Activated CD4-positive, alpha-beta T cell treated with anti-CD3 and anti-CD28 coated beads for 36 hours (primary cell): ENCODE measurements at regions of chr15 and their contacts with region 1.

Region 1: DNA sequence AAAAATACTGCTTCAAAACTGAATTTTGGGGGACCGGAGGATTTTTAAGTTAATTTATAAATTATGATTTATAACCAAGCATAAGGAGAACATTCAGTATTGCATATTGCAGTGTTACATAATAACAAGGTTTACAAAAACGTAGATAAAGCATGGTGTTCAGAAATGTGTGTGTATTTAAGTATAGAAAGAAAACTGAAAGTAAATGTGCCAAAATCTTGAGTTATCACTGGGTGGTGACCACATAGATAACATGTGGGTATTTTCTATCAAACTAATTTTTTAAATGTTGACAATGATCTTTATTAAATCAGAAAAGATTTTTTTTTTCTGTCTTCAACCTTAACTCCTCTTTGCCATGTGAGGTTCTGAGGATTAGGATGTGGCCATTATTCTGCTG is 32.6 kb downstream of the EIF2AK4 start:
- DNase-seq: no peak
- ATAC-seq: no peak
- H3K4me3 Mint-ChIP-seq: no peak overlapping the region
- H3K27ac Mint-ChIP-seq: no peak overlapping the region
- H3K4me1 Mint-ChIP-seq: peaks cover 42% of the 10 kb centered on the region
- H3K27me3 Mint-ChIP-seq: no peaks in the 10 kb centered on the region

Region 2: GRCh38 chr15:39920510-39921273 is 45.8 kb before region 1 on chr15:
- CTCF ChIA-PET with region 1: no interaction called
- POLR2A ChIA-PET with region 1: no interaction called
- intact Hi-C with region 1: loop called in 1 of 2 experiments (anchors 2 kb)
- DNase-seq: peak; percentile 93
- ATAC-seq: peak; percentile 89
- H3K4me3 Mint-ChIP-seq: peak overlapping the region; percentile 73
- H3K27ac Mint-ChIP-seq: peak overlapping the region; percentile 73
- H3K4me1 Mint-ChIP-seq: peaks cover 29% of the 10 kb centered on the region
- H3K27me3 Mint-ChIP-seq: peaks cover 19% of the 10 kb centered on the region